ENCODE measurements at regions of chr20 and their contacts with region 1.

Region 1: GRCh38 chr20:25281541-25281991 is 33.7 kb downstream of the PYGB start:
- DNase-seq: no peak
- H3K4me3 ChIP-seq: no peak overlapping the region
- H3K27ac ChIP-seq: peak overlapping the region in 1 of 4 donors; percentile 25
- H3K4me1 ChIP-seq: peaks cover 5 to 36% (median 7%) of the 10 kb centered on the region in 3 donors
- H3K27me3 ChIP-seq: no peaks in the 10 kb centered on the region
- CTCF ChIP-seq: no peak
- POLR2A ChIP-seq: no peak

Region 2: GRCh38 chr20:24781422-24781980 is 500.1 kb before region 1 on chr20:
- intact Hi-C with region 1: no loop called
- DNase-seq: no peak
- H3K4me3 ChIP-seq: no peak overlapping the region
- H3K27ac ChIP-seq: no peak overlapping the region
- H3K4me1 ChIP-seq: peaks cover 0 to 17% (median 3%) of the 10 kb centered on the region in 3 donors
- H3K27me3 ChIP-seq: peaks cover 0 to 12% (median 0%) of the 10 kb centered on the region in 4 donors
- CTCF ChIP-seq: peak in 4 of 6 experiments; percentile 21 to 43 (median 25)
- POLR2A ChIP-seq: no peak

Region 3: GRCh38 chr20:24816907-24817306 is 464.7 kb before region 1 on chr20:
- intact Hi-C with region 1: no loop called
- DNase-seq: no peak
- H3K4me3 ChIP-seq: no peak overlapping the region
- H3K27ac ChIP-seq: no peak overlapping the region
- H3K4me1 ChIP-seq: no peaks in the 10 kb centered on the region
- H3K27me3 ChIP-seq: no peaks in the 10 kb centered on the region
- CTCF ChIP-seq: no peak
- POLR2A ChIP-seq: no peak

Region 4: GRCh38 chr20:25216199-25216945 is 65.2 kb before region 1 on chr20:
- intact Hi-C with region 1: loop called (anchors 10 kb)
- DNase-seq: no peak
- H3K4me3 ChIP-seq: no peak overlapping the region
- H3K27ac ChIP-seq: no peak overlapping the region
- H3K4me1 ChIP-seq: peaks cover 0 to 13% (median 5%) of the 10 kb centered on the region in 3 donors
- H3K27me3 ChIP-seq: no peaks in the 10 kb centered on the region
- CTCF ChIP-seq: no peak
- POLR2A ChIP-seq: no peak

Region 5: GRCh38 chr20:25341716-25342680 is 60.4 kb after region 1 on chr20:
- intact Hi-C with region 1: no loop called
- DNase-seq: no peak
- H3K4me3 ChIP-seq: no peak overlapping the region
- H3K27ac ChIP-seq: no peak overlapping the region
- H3K4me1 ChIP-seq: peaks cover 0 to 24% (median 7%) of the 10 kb centered on the region in 3 donors
- H3K27me3 ChIP-seq: no peaks in the 10 kb centered on the region
- CTCF ChIP-seq: peak in 1 of 6 experiments; percentile 25
- POLR2A ChIP-seq: no peak

Region 6: GRCh38 chr20:25486377-25486776 is 204.8 kb after region 1 on chr20:
- intact Hi-C with region 1: no loop called
- DNase-seq: no peak
- H3K4me3 ChIP-seq: no peak overlapping the region
- H3K27ac ChIP-seq: no peak overlapping the region
- H3K4me1 ChIP-seq: peaks cover 15 to 66% (median 41%) of the 10 kb centered on the region in 3 donors
- H3K27me3 ChIP-seq: no peaks in the 10 kb centered on the region
- CTCF ChIP-seq: no peak
- POLR2A ChIP-seq: no peak